ENCODE measurements at regions of chr11 and their contacts with region 1.

Region 1: GRCh38 chr11:63838678-63839507 is at the start of gene MARK2:
- DNase-seq: peak; percentile 100
- H3K4me3 ChIP-seq: peak within 1 kb of the TSS; percentile 98
- H3K27ac ChIP-seq: peak within 1 kb of the TSS; percentile 86
- H3K4me1 ChIP-seq: peaks cover 31% of the 10 kb centered on the region
- H3K27me3 ChIP-seq: no peaks in the 10 kb centered on the region
- CTCF ChIP-seq: no peak
- total RNA-seq, gene MARK2: 54.9 and 61.7 TPM in 2 replicates

Region 2: GRCh38 chr11:63567044-63567840 is 271.7 kb before region 1 on chr11:
- CTCF ChIA-PET with region 1: no interaction called
- POLR2A ChIA-PET with region 1: no interaction called
- intact Hi-C with region 1: no loop called
- DNase-seq: peak; percentile 63
- H3K4me3 ChIP-seq: no peak overlapping the region
- H3K27ac ChIP-seq: no peak overlapping the region
- H3K4me1 ChIP-seq: peaks cover 6% of the 10 kb centered on the region
- H3K27me3 ChIP-seq: no peaks in the 10 kb centered on the region
- CTCF ChIP-seq: no peak

Region 3: DNA sequence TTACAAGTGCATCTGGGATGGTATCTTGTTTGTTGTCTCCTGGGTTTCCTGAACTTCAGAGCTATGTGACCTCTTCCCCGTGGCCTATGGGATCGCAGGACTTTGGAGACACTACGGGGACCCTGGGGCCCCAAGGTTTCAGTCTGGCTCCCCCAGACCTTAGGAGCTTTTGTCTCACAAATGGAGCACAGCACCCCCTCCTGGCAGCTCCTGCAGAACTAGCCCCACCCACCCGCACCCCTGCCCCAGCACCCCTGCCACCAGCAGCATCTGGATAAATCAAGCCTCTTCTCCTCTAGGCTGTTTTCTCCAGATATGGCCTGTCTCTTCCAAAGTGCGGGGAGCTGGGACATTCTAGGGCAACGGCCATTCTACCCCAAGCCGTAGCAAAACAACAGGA is 67.7 kb after region 1 on chr11:
- CTCF ChIA-PET with region 1: interaction called, 4 read pairs
- POLR2A ChIA-PET with region 1: no interaction called
- intact Hi-C with region 1: loop called (anchors 1 kb)
- DNase-seq: peak; percentile 51
- H3K4me3 ChIP-seq: no peak overlapping the region
- H3K27ac ChIP-seq: no peak overlapping the region
- H3K4me1 ChIP-seq: peaks cover 10% of the 10 kb centered on the region
- H3K27me3 ChIP-seq: no peaks in the 10 kb centered on the region
- CTCF ChIP-seq: peak; percentile 42; the same call in 1 of the 2 replicates

Region 4: GRCh38 chr11:63945477-63946163 is 106.7 kb after region 1 on chr11:
- CTCF ChIA-PET with region 1: interaction called, 44 read pairs
- POLR2A ChIA-PET with region 1: no interaction called
- intact Hi-C with region 1: loop called (anchors 1 kb)
- DNase-seq: peak; percentile 90
- H3K4me3 ChIP-seq: no peak overlapping the region
- H3K27ac ChIP-seq: peak overlapping the region; percentile 39
- H3K4me1 ChIP-seq: peaks cover 7% of the 10 kb centered on the region
- H3K27me3 ChIP-seq: no peaks in the 10 kb centered on the region
- CTCF ChIP-seq: peak; percentile 84

Region 5: DNA sequence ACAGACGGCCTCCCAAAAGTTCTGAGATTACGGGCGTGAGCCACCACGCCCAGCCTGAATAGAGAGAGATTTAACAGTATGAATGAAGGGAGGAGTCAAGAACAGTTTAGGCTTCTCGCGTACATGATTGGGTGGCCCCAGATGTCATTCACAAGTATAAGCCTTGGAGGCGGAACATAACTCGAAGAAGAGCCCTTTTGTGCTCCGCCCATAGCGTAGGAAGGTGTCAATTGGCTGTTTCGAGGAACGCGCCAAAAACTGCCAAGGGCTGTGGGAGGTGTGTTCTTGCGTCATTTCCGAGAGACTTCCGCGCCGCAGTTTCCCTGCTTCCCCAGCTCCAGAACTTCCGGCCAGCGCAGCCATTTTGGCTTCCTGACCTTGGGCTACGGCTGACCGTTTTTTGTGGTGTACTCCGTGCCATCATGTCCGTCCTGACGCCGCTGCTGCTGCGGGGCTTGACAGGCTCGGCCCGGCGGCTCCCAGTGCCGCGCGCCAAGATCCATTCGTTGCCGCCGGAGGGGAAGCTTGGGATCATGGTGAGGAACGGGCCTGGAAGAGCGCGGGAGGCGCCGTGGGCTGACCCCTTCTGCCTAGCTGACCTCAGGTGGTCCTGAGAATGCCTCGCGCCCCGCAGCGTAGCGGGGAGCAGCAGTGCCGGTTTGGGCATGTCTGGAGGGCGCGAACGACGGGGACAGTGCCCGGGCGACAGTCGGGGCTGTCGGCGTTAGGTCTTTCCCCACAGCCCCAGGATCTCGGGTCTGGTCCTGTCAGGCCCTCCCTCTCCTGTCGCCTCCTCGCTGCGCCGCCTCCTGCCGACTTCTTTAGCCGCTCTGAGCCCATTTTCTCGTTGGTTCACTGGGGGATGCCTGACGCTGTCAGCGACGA is 135.6 kb after region 1 on chr11 and contains the start of gene COX8A:
- CTCF ChIA-PET with region 1: no interaction called
- POLR2A ChIA-PET with region 1: no interaction called
- intact Hi-C with region 1: loop called (anchors 10 kb)
- DNase-seq: peak; percentile 100
- H3K4me3 ChIP-seq: peak within 1 kb of the TSS; percentile 72
- H3K27ac ChIP-seq: peak within 1 kb of the TSS; percentile 96
- H3K4me1 ChIP-seq: peaks cover 34% of the 10 kb centered on the region
- H3K27me3 ChIP-seq: no peaks in the 10 kb centered on the region
- CTCF ChIP-seq: no peak
- total RNA-seq, gene COX8A: 615 and 652 TPM in 2 replicates

Region 6: GRCh38 chr11:64148200-64148916 is 309.5 kb after region 1 on chr11:
- CTCF ChIA-PET with region 1: interaction called, 3 read pairs
- POLR2A ChIA-PET with region 1: no interaction called
- intact Hi-C with region 1: loop called (anchors 2 kb)
- DNase-seq: peak; percentile 94
- H3K4me3 ChIP-seq: peak overlapping the region; percentile 34
- H3K27ac ChIP-seq: peak overlapping the region; percentile 75
- H3K4me1 ChIP-seq: peaks cover 22% of the 10 kb centered on the region
- H3K27me3 ChIP-seq: no peaks in the 10 kb centered on the region
- CTCF ChIP-seq: peak; percentile 100

Region 7: DNA sequence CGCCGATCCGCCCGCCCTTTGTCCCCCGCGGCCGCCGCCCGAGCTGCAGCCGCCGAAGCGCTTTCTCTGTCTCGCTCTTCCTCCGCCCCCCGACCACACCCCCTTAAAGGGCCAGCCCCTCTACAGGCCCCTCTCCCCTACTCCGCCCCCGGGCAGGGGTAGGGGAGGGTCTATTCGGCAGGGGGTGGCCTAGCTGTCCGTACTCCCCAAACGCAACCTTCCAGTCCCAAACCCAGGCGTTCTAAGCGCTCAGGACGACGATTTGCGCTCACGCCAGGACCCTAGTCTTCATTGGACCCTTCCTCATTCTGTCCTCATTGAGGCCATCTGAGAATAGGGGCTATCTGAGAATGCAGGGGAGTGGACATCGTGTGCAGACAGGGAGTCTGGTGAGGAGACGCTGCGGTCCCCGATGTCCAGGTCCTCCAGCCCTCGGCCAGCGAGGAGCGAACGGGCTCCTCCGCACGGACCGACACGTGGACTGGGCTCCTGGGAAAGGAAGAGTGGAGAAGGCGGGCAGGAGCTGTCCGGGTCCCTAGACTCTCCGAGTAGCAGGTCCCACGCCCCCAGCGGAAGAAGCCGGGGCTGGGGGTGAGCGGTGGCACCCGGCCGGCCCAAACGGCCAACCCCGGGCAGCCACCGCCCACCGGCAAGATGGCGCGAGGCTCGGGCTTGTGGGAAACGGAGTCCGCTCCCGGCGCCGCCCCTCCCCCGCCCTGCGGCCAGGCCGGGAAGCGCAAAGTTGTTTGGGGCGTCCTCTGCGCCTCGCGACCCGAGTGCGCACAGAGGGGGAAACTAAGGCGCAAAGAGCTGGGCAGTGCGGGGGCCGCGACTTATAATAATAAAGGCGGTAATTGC is 408.2 kb after region 1 on chr11 and contains the start of gene PPP1R14B:
- CTCF ChIA-PET with region 1: no interaction called
- POLR2A ChIA-PET with region 1: no interaction called
- intact Hi-C with region 1: no loop called
- DNase-seq: peak; percentile 95
- H3K4me3 ChIP-seq: peak within 1 kb of the TSS; percentile 99
- H3K27ac ChIP-seq: peak within 1 kb of the TSS; percentile 92
- H3K4me1 ChIP-seq: peaks cover 32% of the 10 kb centered on the region
- H3K27me3 ChIP-seq: no peaks in the 10 kb centered on the region
- CTCF ChIP-seq: no peak
- total RNA-seq, gene PPP1R14B: 378 and 402 TPM in 2 replicates

Measured in A673 (cell line).